Caco-2 (cell line): ENCODE measurements at regions of chr5 and their contacts with region 1.

Region 1: DNA sequence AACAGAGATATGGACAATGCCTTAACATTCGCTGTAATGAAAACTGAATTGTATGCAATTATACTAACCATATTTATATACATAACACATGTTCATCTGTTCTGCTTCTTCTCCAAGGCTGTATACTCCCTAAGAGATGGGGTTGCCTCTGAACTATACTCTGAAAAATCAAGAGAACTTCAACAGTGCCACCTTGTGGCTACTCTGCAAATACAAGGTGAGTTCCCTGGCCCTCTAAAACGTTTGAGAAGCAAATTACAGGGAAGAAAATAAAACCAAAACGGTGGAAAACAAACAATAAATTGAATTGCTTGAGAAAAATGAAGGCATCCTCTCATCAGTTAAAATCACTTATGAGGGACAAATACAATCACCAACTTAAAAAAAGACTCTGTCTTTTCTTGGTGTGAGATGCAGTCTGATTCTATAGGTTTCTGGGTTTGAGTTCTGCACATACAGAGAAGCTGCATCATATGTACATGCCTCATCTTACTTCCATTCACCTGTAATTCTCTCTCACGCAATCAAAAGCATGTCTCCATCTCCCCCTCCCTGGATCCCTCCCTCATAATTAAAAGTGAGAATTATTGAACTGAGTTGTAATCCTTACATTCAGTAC is 98.6 kb downstream of the FBXW11 start:
- DNase-seq: peak in 1 of 2 experiments; percentile 66
- H3K4me3 ChIP-seq: no peak overlapping the region
- H3K4me3 Mint-ChIP-seq: no peak overlapping the region
- H3K27ac Mint-ChIP-seq: no peak overlapping the region
- H3K4me1 ChIP-seq: no peaks in the 10 kb centered on the region
- H3K4me1 Mint-ChIP-seq: no peaks in the 10 kb centered on the region
- H3K27me3 ChIP-seq: no peaks in the 10 kb centered on the region
- H3K27me3 Mint-ChIP-seq: no peaks in the 10 kb centered on the region
- CTCF ChIP-seq: peak; percentile 78 to 79

Region 2: DNA sequence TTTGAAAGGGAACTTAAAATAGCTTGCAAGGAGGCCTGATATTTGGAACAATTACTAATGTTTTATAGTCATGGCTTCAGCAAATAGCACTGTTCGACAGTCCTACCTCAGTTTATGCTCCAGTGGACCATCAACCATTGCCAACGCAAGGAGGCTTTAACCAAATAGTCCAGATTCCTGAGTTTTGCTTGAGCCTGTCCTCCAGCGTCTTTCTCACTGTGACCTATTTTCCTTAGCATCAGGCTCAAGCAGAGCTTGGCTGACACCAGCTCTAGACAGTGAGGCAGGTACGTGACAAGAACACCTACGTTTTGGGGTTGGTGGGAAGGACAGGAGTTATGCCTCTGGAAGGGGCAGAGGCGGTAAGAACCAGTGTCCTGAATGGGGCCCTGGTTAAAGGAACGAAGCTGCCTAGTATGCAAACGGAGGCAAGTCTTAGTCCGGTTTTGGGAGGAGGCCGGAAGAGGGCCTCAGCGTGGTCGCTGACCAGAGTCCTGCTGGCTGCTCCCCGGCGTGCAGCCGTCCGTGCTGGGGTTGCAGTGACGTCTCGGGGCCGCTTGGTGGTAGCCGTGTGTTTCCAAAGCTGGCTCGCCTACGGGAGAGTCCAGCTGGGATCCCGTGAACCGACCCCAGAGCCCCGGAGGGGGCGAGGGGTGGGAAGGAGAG is 489.4 kb before region 1 on chr5:
- CTCF ChIA-PET with region 1: interaction called, 11 read pairs
- POLR2A ChIA-PET with region 1: no interaction called
- intact Hi-C with region 1: loop called (anchors 1 kb)
- DNase-seq: peak; percentile 89 to 94
- H3K4me3 ChIP-seq: peak overlapping the region; percentile 47
- H3K4me3 Mint-ChIP-seq: peak overlapping the region; percentile 93
- H3K27ac Mint-ChIP-seq: peak overlapping the region; percentile 82
- H3K4me1 ChIP-seq: no peaks in the 10 kb centered on the region
- H3K4me1 Mint-ChIP-seq: peaks cover 9% of the 10 kb centered on the region
- H3K27me3 ChIP-seq: no peaks in the 10 kb centered on the region
- H3K27me3 Mint-ChIP-seq: no peaks in the 10 kb centered on the region
- CTCF ChIP-seq: peak; percentile 91 to 93

Region 3: GRCh38 chr5:171630027-171630669 is 277.7 kb before region 1 on chr5:
- CTCF ChIA-PET with region 1: no interaction called
- POLR2A ChIA-PET with region 1: no interaction called
- intact Hi-C with region 1: loop called (anchors 1 kb)
- DNase-seq: peak; percentile 78 to 80
- H3K4me3 ChIP-seq: no peak overlapping the region
- H3K4me3 Mint-ChIP-seq: peak overlapping the region; percentile 53
- H3K27ac Mint-ChIP-seq: no peak overlapping the region
- H3K4me1 ChIP-seq: peaks cover 11% of the 10 kb centered on the region
- H3K4me1 Mint-ChIP-seq: no peaks in the 10 kb centered on the region
- H3K27me3 ChIP-seq: no peaks in the 10 kb centered on the region; the same call in none of the 2 replicates
- H3K27me3 Mint-ChIP-seq: peaks cover 11% of the 10 kb centered on the region
- CTCF ChIP-seq: peak; percentile 58 to 71

Region 4: DNA sequence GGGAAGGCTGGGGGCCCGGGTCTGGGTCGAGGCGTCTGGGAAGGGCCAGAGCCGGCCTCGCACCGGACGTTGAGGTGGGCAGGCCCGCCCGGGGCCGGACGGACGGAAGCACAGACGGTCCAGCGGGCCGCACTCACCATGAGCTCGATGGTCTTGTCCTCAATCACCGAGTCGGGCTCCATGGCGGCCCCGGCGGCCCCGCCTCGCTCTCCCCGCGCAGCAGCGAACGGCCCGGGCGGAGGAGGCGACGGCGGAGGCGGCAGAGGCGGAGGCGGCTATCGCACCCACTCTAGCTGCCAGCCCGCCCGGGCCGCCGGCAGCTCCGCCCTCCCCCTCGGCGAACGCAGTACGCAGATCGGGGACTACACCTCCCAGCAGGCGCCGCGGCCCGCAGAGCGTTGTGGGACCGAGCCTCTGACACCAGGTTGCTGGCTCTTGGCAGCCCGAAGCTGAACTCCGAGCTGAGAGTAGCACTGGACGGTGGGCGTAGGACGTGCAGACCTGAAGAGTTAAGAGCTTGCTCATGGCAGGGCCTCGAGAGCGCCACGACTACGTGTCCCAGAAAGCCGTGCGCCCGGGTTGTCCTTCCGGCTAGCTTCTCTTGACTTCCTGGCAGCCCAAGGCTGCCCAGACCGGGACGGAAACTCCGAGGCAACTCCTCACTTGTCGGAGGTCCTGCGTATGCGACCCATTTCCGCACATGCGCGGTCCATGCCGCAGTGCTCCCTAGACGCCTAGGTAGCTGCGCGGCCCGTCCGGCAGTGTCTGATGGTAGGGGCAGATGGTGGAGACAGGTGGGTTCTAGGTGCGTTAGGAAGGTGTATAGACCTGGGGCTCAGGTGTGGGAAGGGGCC is 98.7 kb after region 1 on chr5 and contains the start of gene FBXW11:
- CTCF ChIA-PET with region 1: interaction called, 15 read pairs
- POLR2A ChIA-PET with region 1: interaction called, 14 read pairs
- intact Hi-C with region 1: no loop called
- DNase-seq: peak; percentile 95 to 98
- H3K4me3 ChIP-seq: peak within 1 kb of the TSS; percentile 45
- H3K4me3 Mint-ChIP-seq: peak within 1 kb of the TSS; percentile 90
- H3K27ac Mint-ChIP-seq: peak within 1 kb of the TSS; percentile 92
- H3K4me1 ChIP-seq: peaks cover 32% of the 10 kb centered on the region
- H3K4me1 Mint-ChIP-seq: peaks cover 37% of the 10 kb centered on the region
- H3K27me3 ChIP-seq: no peaks in the 10 kb centered on the region
- H3K27me3 Mint-ChIP-seq: no peaks in the 10 kb centered on the region
- CTCF ChIP-seq: no peak
- total RNA-seq, gene FBXW11: 46.2 and 46.3 TPM in 2 replicates

Region 5: GRCh38 chr5:172059661-172060100 is 151.8 kb after region 1 on chr5:
- CTCF ChIA-PET with region 1: interaction called, 41 read pairs
- POLR2A ChIA-PET with region 1: no interaction called
- intact Hi-C with region 1: loop called (anchors 1 kb)
- DNase-seq: peak in 1 of 2 experiments; percentile 21
- H3K4me3 ChIP-seq: no peak overlapping the region
- H3K4me3 Mint-ChIP-seq: no peak overlapping the region
- H3K27ac Mint-ChIP-seq: no peak overlapping the region
- H3K4me1 ChIP-seq: no peaks in the 10 kb centered on the region
- H3K4me1 Mint-ChIP-seq: no peaks in the 10 kb centered on the region
- H3K27me3 ChIP-seq: no peaks in the 10 kb centered on the region
- H3K27me3 Mint-ChIP-seq: no peaks in the 10 kb centered on the region
- CTCF ChIP-seq: peak; percentile 57 to 73